ENCODE measurements at regions of chr1 and their contacts with region 1.

Region 1: GRCh38 chr1:109532365-109533136 is 7.1 kb upstream of the GPR61 start:
- DNase-seq: no peak
- ATAC-seq: peak; percentile 93
- H3K4me3 ChIP-seq: peak overlapping the region; percentile 41; the same call in 1 of the 2 replicates
- H3K27ac ChIP-seq: peak overlapping the region; percentile 56
- H3K4me1 ChIP-seq: peaks cover 14% of the 10 kb centered on the region
- H3K27me3 ChIP-seq: no peaks in the 10 kb centered on the region
- CTCF ChIP-seq: peak; percentile 96 to 99 (median 97)
- EP300 ChIP-seq: no peak
- POLR2A ChIP-seq: no peak
- RAD21 ChIP-seq: peak; percentile 92

Region 2: DNA sequence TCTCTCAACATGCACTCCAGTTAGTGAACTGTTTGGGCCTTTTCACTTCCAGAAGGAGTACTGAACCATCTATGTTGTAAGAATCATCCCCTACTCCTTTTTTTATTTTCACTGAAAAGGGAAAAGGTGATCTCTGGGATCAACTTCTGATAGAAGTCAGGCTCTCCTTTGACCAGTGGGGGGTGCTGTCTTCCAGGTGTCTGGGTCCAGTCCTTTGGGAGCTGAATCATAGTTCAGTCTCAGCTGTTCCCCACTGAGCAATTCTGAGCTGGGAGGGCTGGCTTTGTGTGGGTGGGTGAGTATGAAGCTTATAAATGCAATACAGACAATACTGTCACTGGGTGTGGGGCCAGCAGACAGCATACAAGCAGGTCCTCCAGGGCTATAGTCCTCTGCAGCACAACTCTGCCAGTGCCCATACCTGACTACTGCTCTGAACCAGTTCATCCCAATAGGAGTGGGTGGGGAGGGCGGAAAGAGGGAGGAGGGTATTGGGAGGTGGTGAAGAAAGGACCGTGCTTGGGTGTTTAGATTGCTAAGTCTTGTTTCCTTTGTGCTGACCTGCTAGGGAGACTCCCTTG is 331.3 kb before region 1 on chr1:
- CTCF ChIA-PET with region 1: interaction called, 8 read pairs
- POLR2A ChIA-PET with region 1: no interaction called
- RAD21 ChIA-PET with region 1: interaction called, 10 read pairs
- SMC1A ChIA-PET with region 1: interaction called, 5 read pairs
- in situ Hi-C with region 1: no loop called
- intact Hi-C with region 1: no loop called
- DNase-seq: no peak
- ATAC-seq: peak; percentile 79
- H3K4me3 ChIP-seq: no peak overlapping the region
- H3K27ac ChIP-seq: no peak overlapping the region
- H3K4me1 ChIP-seq: no peaks in the 10 kb centered on the region
- H3K27me3 ChIP-seq: no peaks in the 10 kb centered on the region; a peak in 1 of 4 replicates
- CTCF ChIP-seq: peak; percentile 60 to 69 (median 67)
- EP300 ChIP-seq: no peak
- POLR2A ChIP-seq: no peak
- RAD21 ChIP-seq: peak; percentile 59

Region 3: GRCh38 chr1:109263597-109264398 is 268.8 kb before region 1 on chr1:
- CTCF ChIA-PET with region 1: interaction called, 14 read pairs
- POLR2A ChIA-PET with region 1: no interaction called
- RAD21 ChIA-PET with region 1: interaction called, 6 read pairs
- SMC1A ChIA-PET with region 1: interaction called, 10 read pairs
- in situ Hi-C with region 1: loop called (anchors 5 kb)
- intact Hi-C with region 1: loop called (anchors 1 kb)
- DNase-seq: peak; percentile 8
- ATAC-seq: peak; percentile 97
- H3K4me3 ChIP-seq: no peak overlapping the region
- H3K27ac ChIP-seq: no peak overlapping the region
- H3K4me1 ChIP-seq: no peaks in the 10 kb centered on the region
- H3K27me3 ChIP-seq: no peaks in the 10 kb centered on the region
- CTCF ChIP-seq: peak; percentile 89 to 99 (median 96)
- EP300 ChIP-seq: no peak
- POLR2A ChIP-seq: no peak
- RAD21 ChIP-seq: peak; percentile 73

Region 4: GRCh38 chr1:109404838-109405237 is 127.7 kb before region 1 on chr1:
- CTCF ChIA-PET with region 1: interaction called, 90 read pairs
- POLR2A ChIA-PET with region 1: no interaction called
- RAD21 ChIA-PET with region 1: interaction called, 25 read pairs
- SMC1A ChIA-PET with region 1: interaction called, 38 read pairs
- in situ Hi-C with region 1: no loop called
- intact Hi-C with region 1: no loop called
- DNase-seq: no peak
- ATAC-seq: peak; percentile 36; the same call in 2 of the 3 replicates
- H3K4me3 ChIP-seq: no peak overlapping the region
- H3K27ac ChIP-seq: no peak overlapping the region
- H3K4me1 ChIP-seq: no peaks in the 10 kb centered on the region
- H3K27me3 ChIP-seq: no peaks in the 10 kb centered on the region
- CTCF ChIP-seq: no peak
- EP300 ChIP-seq: no peak
- POLR2A ChIP-seq: no peak
- RAD21 ChIP-seq: no peak

Region 5: GRCh38 chr1:109493805-109494539 is 38.6 kb before region 1 on chr1 and contains the start of gene CYB561D1:
- CTCF ChIA-PET with region 1: interaction called, 1,280 read pairs
- POLR2A ChIA-PET with region 1: interaction called, 17 read pairs
- RAD21 ChIA-PET with region 1: interaction called, 422 read pairs
- SMC1A ChIA-PET with region 1: interaction called, 431 read pairs
- in situ Hi-C with region 1: loop called (anchors 5 kb)
- intact Hi-C with region 1: loop called (anchors 1 kb)
- DNase-seq: peak; percentile 55
- ATAC-seq: peak; percentile 94
- H3K4me3 ChIP-seq: peak within 1 kb of the TSS; percentile 82
- H3K27ac ChIP-seq: peak within 1 kb of the TSS; percentile 79
- H3K4me1 ChIP-seq: peaks cover 4% of the 10 kb centered on the region
- H3K27me3 ChIP-seq: no peaks in the 10 kb centered on the region
- CTCF ChIP-seq: peak; percentile 94 to 98 (median 95); a peak in 5 of 6 replicates
- EP300 ChIP-seq: 0 out of 4 replicates have a peak, but pooled peaks of 1 of the 2 experiments have one; percentile 14
- POLR2A ChIP-seq: peak; percentile 96
- RAD21 ChIP-seq: peak; percentile 41; the same call in 1 of the 2 replicates
- polyA plus RNA-seq, gene CYB561D1: 0.68 to 1.0 TPM

Region 6: GRCh38 chr1:109548321-109549267 is 16.0 kb after region 1 on chr1 and contains the start of gene GNAI3:
- CTCF ChIA-PET with region 1: interaction called, 43 read pairs
- POLR2A ChIA-PET with region 1: interaction called, 4 read pairs
- RAD21 ChIA-PET with region 1: interaction called, 18 read pairs
- SMC1A ChIA-PET with region 1: interaction called, 14 read pairs
- in situ Hi-C with region 1: no loop called
- intact Hi-C with region 1: no loop called
- DNase-seq: peak; percentile 85
- ATAC-seq: peak; percentile 95
- H3K4me3 ChIP-seq: peak within 1 kb of the TSS; percentile 92
- H3K27ac ChIP-seq: peak within 1 kb of the TSS; percentile 96
- H3K4me1 ChIP-seq: peaks cover 6% of the 10 kb centered on the region
- H3K27me3 ChIP-seq: no peaks in the 10 kb centered on the region
- CTCF ChIP-seq: no peak
- EP300 ChIP-seq: peak; percentile 13 to 61; a peak in 3 of 4 replicates
- POLR2A ChIP-seq: peak; percentile 99
- RAD21 ChIP-seq: no peak
- polyA plus RNA-seq, gene GNAI3: 6.2 TPM

Region 7: DNA sequence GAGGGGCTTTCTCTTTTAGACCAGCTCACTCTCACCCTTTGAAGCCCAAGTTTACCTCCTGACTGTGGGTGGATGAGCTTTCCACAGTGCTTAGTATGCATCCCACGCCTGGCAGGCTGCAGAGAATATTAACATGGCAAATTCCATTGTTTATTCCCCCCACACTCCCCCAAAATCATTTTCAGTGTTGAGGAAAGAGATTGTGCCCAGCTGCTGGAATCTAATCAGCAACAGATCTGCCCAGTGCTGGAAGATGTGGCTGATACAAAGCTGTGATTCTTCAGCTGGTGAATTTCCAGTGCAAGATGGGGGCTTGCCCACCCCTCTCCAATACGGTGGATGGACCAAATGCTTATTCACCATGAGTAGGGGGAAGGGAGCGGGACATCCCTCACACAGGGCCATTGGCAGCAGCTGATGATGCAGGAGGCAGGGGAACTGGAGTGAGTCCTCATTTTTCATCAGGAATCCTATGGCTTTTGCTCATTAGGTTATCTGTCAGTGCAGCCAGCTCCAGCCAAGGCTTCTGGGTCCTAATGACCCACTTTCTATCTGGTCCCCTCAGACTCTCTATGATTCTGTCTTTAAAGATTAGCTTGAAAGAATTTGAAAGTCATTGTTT is 1181.9 kb after region 1 on chr1:
- CTCF ChIA-PET with region 1: no interaction called
- POLR2A ChIA-PET with region 1: no interaction called
- RAD21 ChIA-PET with region 1: no interaction called
- SMC1A ChIA-PET with region 1: no interaction called
- in situ Hi-C with region 1: no loop called
- intact Hi-C with region 1: no loop called
- DNase-seq: no peak
- ATAC-seq: no peak
- H3K4me3 ChIP-seq: no peak overlapping the region
- H3K27ac ChIP-seq: no peak overlapping the region
- H3K4me1 ChIP-seq: no peaks in the 10 kb centered on the region
- H3K27me3 ChIP-seq: no peaks in the 10 kb centered on the region
- CTCF ChIP-seq: no peak
- EP300 ChIP-seq: no peak
- POLR2A ChIP-seq: no peak
- RAD21 ChIP-seq: no peak